ENCODE measurements at regions of chr4 and their contacts with region 1.

Region 1: GRCh38 chr4:6873792-6874461 is 35.7 kb upstream of the TBC1D14 start:
- DNase-seq: peak; percentile 81
- ATAC-seq: peak; percentile 87
- H3K4me3 Mint-ChIP-seq: no peak overlapping the region
- H3K27ac Mint-ChIP-seq: no peak overlapping the region; the same call in 1 of the 2 replicates
- H3K4me1 Mint-ChIP-seq: 0 out of 2 replicates have a peak, but pooled peaks cover 2% of the 10 kb centered on the region
- H3K27me3 Mint-ChIP-seq: no peaks in the 10 kb centered on the region
- CTCF ChIP-seq: peak; percentile 61

Region 2: DNA sequence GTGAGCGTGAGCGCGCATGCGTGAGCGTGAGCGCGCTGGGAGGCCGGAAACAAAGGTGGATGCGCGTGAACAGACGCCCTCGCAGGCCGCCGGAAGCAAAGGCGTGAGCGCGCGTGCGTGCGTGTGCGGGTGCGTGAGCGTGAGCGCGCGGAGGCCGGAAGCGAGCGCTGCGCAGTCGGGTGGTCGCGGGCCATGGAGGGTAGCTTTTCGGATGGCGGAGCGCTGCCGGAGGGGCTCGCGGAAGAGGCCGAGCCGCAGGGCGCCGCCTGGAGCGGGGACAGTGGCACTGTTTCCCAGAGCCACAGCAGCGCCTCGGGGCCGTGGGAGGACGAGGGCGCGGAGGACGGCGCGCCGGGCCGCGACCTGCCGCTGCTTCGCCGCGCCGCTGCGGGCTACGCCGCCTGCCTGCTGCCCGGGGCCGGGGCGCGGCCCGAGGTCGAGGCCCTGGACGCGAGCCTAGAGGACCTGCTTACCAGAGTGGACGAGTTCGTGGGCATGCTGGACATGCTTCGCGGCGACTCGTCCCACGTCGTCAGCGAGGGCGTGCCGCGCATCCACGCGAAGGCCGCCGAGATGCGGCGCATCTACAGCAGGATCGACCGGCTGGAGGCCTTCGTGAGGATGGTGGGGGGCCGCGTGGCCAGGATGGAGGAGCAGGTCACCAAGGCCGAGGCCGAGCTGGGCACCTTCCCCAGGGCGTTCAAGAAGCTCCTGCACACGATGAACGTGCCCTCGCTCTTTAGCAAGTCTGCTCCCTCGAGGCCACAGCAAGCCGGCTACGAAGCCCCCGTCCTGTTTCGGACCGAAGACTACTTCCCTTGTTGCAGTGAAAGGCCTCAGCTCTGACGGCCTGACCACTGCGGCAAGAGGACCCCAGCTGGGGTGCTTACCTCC is 157.7 kb before region 1 on chr4 and contains the start of gene BLOC1S4:
- CTCF ChIA-PET with region 1: interaction called, 94 read pairs
- POLR2A ChIA-PET with region 1: no interaction called
- DNase-seq: peak; percentile 77
- ATAC-seq: peak; percentile 73
- H3K4me3 Mint-ChIP-seq: peak within 1 kb of the TSS; percentile 75
- H3K27ac Mint-ChIP-seq: peak within 1 kb of the TSS; percentile 96
- H3K4me1 Mint-ChIP-seq: peaks cover 8% of the 10 kb centered on the region
- H3K27me3 Mint-ChIP-seq: peaks cover 34% of the 10 kb centered on the region
- CTCF ChIP-seq: no peak
- total RNA-seq, gene BLOC1S4: 21.4 to 23.4 TPM (median 21.9 TPM) in 3 replicates

Region 3: DNA sequence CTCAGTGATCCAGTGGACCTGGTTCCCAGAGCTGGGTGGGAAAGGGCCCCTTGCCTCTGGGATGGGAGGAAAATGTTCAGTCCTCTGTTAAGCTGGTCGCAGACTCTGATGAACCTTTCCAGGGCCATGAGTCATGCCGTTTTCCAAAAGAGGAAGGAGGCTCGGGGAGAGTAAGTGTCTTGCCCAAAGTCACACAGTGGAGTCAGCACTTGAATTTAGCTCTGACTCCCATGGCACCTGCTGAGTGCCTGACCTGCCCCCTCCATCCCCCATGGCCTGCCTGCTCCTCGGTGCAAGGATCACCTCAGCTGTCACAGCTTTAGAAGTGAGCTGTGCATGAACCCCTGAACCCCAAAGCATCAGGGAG is 105.4 kb before region 1 on chr4:
- CTCF ChIA-PET with region 1: interaction called, 10 read pairs
- POLR2A ChIA-PET with region 1: no interaction called
- DNase-seq: no peak
- ATAC-seq: no peak
- H3K4me3 Mint-ChIP-seq: no peak overlapping the region
- H3K27ac Mint-ChIP-seq: no peak overlapping the region
- H3K4me1 Mint-ChIP-seq: peaks cover under 1% of the 10 kb centered on the region; the same call in 1 of the 2 replicates
- H3K27me3 Mint-ChIP-seq: no peaks in the 10 kb centered on the region
- CTCF ChIP-seq: no peak

Region 4: GRCh38 chr4:6885951-6886557 is 12.1 kb after region 1 on chr4:
- CTCF ChIA-PET with region 1: interaction called, 38 read pairs
- POLR2A ChIA-PET with region 1: no interaction called
- DNase-seq: no peak
- ATAC-seq: no peak; the same call in 1 of the 2 replicates
- H3K4me3 Mint-ChIP-seq: no peak overlapping the region
- H3K27ac Mint-ChIP-seq: no peak overlapping the region
- H3K4me1 Mint-ChIP-seq: peaks cover 7% of the 10 kb centered on the region
- H3K27me3 Mint-ChIP-seq: no peaks in the 10 kb centered on the region
- CTCF ChIP-seq: no peak